ENCODE measurements at regions of chr11 and their contacts with region 1.

Region 1: GRCh38 chr11:62841361-62842184 is 2.2 kb upstream of the WDR74 start:
- DNase-seq: peak; percentile 81 to 96 (median 88)
- ATAC-seq: peak; percentile 89
- H3K4me3 ChIP-seq: peak overlapping the region; percentile 33
- H3K27ac ChIP-seq: peak overlapping the region; percentile 89
- H3K4me1 ChIP-seq: peaks cover 8 to 19% of the 10 kb centered on the region in 2 experiments; a peak in 3 of 5 replicates
- H3K27me3 ChIP-seq: no peaks in the 10 kb centered on the region
- CTCF ChIP-seq: 0 out of 6 replicates have a peak, but pooled peaks of 2 of the 3 experiments have one; percentile 3 to 10
- EP300 ChIP-seq: peak; percentile 82
- POLR2A ChIP-seq: peak; percentile 100
- RAD21 ChIP-seq: peak; percentile 33 to 74; a peak in 3 of 4 replicates

Region 2: GRCh38 chr11:62591448-62592145 is 250.0 kb before region 1 on chr11 and contains the start of gene TUT1:
- CTCF ChIA-PET with region 1: no interaction called
- POLR2A ChIA-PET with region 1: interaction called, 10 read pairs
- in situ Hi-C with region 1: no loop called
- intact Hi-C with region 1: loop called (anchors 2 kb)
- DNase-seq: peak; percentile 81 to 99 (median 86)
- ATAC-seq: peak; percentile 91
- H3K4me3 ChIP-seq: peak within 1 kb of the TSS; percentile 63
- H3K27ac ChIP-seq: peak within 1 kb of the TSS; percentile 90
- H3K4me1 ChIP-seq: peaks cover 24 to 25% of the 10 kb centered on the region in 2 experiments
- H3K27me3 ChIP-seq: no peaks in the 10 kb centered on the region
- CTCF ChIP-seq: peak; percentile 1 to 6 (median 1); a peak in 1 of 6 replicates
- EP300 ChIP-seq: peak; percentile 79
- POLR2A ChIP-seq: peak; percentile 98
- RAD21 ChIP-seq: peak in 1 of 2 experiments; percentile 2; a peak in 1 of 4 replicates
- polyA plus RNA-seq, gene TUT1: 0.66 to 1.5 TPM

Region 3: DNA sequence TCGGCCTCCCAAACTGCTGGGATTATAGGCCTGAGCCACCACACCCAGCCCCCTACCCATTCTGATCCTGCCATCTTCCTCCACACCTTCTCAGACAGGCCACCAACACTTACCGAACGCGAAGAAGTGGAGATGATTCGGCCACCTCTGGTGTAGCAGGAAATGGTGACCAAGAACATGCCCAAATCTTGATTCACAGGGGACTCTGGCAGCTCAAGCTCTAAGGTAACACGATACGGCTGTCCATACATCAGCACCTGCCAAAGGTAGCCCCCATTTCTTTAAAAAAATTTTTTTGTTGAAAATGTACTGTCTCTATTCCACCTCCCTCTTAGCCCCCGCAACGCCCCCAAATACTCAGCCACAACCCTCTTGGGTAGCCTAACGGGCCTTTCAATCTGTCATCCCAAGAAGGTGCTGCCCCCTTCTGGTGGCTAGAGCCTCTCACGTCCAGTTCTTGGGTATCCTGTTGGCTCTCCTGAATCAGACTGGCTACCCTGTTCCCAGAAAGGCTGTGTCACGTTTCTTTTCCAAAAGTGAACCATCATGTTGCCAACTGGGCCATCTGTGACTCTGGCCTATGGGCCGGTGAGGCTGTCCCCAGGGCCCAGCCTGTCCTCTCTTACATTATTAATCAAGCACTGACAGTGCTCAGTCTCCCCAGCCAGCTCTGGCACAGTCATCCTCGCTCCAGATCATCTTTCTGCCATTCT is 147.0 kb before region 1 on chr11:
- CTCF ChIA-PET with region 1: no interaction called
- POLR2A ChIA-PET with region 1: no interaction called
- in situ Hi-C with region 1: no loop called
- intact Hi-C with region 1: no loop called
- DNase-seq: peak; percentile 73 to 90 (median 78)
- ATAC-seq: peak; percentile 98
- H3K4me3 ChIP-seq: no peak overlapping the region
- H3K27ac ChIP-seq: no peak overlapping the region; the same call in 2 of the 3 replicates
- H3K4me1 ChIP-seq: no peaks in the 10 kb centered on the region
- H3K27me3 ChIP-seq: no peaks in the 10 kb centered on the region
- CTCF ChIP-seq: peak; percentile 87 to 90 (median 87)
- EP300 ChIP-seq: no peak
- POLR2A ChIP-seq: no peak
- RAD21 ChIP-seq: peak; percentile 77 to 84

Region 4: DNA sequence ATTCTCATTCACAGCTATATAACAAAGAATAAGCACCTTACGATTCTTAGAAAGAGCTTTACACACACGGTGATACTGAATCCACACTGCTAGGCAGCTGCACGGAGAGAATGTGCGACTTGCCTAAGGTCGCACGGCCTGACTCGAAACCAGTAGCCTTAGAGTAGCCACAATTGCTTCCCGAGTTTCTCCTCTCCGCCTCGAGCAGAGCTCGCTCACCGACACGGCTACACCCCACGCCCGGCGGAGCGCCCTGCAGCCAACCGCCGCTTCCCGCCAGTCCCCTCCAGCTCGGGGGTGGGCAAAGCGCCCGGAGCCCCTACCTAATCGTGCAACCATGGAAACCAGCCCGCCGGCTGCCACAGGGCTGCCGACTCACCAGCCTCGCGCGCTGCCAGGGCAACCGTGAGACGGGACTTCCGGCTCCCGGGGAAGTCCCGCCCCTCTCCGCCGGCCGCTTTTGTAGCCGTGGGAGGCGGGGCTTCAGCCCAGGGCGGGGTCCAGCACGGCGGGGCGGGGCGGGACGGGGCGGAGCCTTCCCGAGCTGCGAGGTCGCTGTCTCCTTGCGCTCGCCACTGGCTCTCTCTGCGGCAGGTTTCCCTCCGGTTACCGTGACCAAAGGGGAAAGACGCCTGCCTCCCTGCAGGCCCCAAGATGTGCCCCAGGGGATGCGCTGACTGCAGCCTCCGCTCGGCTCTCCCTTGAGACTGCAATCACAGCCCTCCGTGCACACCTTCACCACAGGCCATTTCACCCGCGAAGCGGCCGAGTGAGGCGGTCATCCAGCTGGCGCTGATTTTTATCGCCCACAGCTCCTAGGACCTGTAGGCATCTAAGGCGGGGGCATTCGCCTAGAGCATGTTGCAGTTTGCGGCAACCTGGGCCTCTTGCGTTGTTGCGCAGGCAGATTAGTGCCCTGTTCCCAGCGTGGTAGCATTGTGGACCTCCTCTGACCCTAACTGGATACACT is 135.4 kb before region 1 on chr11:
- CTCF ChIA-PET with region 1: no interaction called
- POLR2A ChIA-PET with region 1: interaction called, 12 read pairs
- in situ Hi-C with region 1: no loop called
- intact Hi-C with region 1: no loop called
- DNase-seq: peak; percentile 93 to 97 (median 96)
- ATAC-seq: peak; percentile 95
- H3K4me3 ChIP-seq: peak overlapping the region; percentile 72
- H3K27ac ChIP-seq: peak overlapping the region; percentile 82
- H3K4me1 ChIP-seq: peaks cover 29 to 42% of the 10 kb centered on the region in 2 experiments
- H3K27me3 ChIP-seq: no peaks in the 10 kb centered on the region
- CTCF ChIP-seq: no peak
- EP300 ChIP-seq: no peak
- POLR2A ChIP-seq: peak; percentile 79
- RAD21 ChIP-seq: no peak

Region 5: DNA sequence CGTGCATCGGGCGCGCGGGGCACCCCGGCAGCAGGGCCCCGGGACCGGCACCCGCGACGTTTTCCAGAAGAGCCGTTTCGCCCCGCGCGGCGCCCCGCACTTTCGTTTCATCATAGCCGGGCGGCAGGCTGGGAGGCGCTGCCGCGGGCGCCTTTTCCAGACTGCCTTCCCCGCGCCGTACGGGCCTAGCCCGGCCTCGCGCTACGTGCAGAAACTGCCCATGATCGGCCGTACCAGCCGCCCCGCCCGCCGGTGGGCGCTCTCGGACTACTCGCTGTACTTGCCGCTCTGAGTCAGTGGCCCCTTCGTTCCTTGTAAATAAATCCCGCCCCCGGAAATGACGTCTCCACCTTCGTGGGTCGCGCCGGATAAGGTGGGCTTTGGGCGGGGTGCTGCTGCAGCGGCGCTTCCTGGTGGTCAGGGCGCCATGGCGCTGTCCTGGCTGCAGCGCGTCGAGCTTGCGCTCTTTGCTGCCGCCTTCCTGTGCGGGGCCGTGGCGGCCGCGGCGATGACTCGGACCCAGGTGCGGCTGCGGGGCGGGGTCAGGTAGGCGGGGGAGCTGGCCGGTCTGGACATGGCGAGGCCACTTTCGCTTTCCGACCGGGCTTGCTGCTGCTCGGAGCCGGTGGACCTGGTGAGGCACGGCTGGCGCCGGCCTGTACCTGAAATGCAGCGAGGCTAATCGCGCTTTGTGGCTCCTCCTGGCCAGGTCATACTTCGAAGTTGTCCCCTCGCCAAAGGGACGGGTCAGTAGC is 54.4 kb before region 1 on chr11 and contains the start of gene TMEM179B:
- CTCF ChIA-PET with region 1: interaction called, 3 read pairs
- POLR2A ChIA-PET with region 1: interaction called, 69 read pairs
- in situ Hi-C with region 1: no loop called
- intact Hi-C with region 1: loop called (anchors 1 kb)
- DNase-seq: peak; percentile 83 to 99 (median 90)
- ATAC-seq: peak; percentile 80
- H3K4me3 ChIP-seq: peak within 1 kb of the TSS; percentile 82
- H3K27ac ChIP-seq: peak within 1 kb of the TSS; percentile 92
- H3K4me1 ChIP-seq: peaks cover 27 to 29% of the 10 kb centered on the region in 2 experiments
- H3K27me3 ChIP-seq: no peaks in the 10 kb centered on the region
- CTCF ChIP-seq: peak; percentile 67 to 90 (median 81)
- EP300 ChIP-seq: no peak
- POLR2A ChIP-seq: peak; percentile 96
- RAD21 ChIP-seq: peak; percentile 28 to 52; a peak in 3 of 4 replicates
- polyA plus RNA-seq, gene TMEM179B: 88.6 to 105 TPM

Region 6: DNA sequence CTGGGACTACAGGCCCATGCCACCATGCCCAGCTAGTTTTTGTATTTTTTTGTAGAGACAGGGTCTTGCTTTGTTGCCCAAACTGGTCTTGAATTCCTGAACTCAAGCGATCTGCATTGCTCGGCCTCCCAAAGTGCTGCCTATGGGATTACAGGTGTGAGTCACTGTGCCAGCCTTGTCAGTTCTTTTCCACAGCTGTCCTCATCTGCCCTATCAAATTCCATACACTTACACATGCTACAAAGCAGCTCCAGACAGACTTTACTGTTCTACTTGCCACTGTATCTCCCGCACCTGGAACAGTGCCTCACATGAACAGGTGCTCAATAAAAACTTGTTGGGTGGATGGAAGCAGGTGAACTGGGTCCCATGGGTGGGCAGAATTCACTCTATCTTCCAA is 17.9 kb before region 1 on chr11:
- CTCF ChIA-PET with region 1: no interaction called
- POLR2A ChIA-PET with region 1: interaction called, 70 read pairs
- in situ Hi-C with region 1: no loop called
- intact Hi-C with region 1: no loop called
- DNase-seq: peak in 1 of 4 experiments; percentile 4
- ATAC-seq: no peak
- H3K4me3 ChIP-seq: no peak overlapping the region
- H3K27ac ChIP-seq: no peak overlapping the region
- H3K4me1 ChIP-seq: no peaks in the 10 kb centered on the region
- H3K27me3 ChIP-seq: no peaks in the 10 kb centered on the region
- CTCF ChIP-seq: no peak
- EP300 ChIP-seq: no peak
- POLR2A ChIP-seq: no peak
- RAD21 ChIP-seq: no peak

Region 7: GRCh38 chr11:62880803-62881578 is 39.4 kb after region 1 on chr11 and contains the start of gene SLC3A2:
- CTCF ChIA-PET with region 1: no interaction called
- POLR2A ChIA-PET with region 1: interaction called, 74 read pairs
- in situ Hi-C with region 1: no loop called
- intact Hi-C with region 1: loop called (anchors 1 kb)
- DNase-seq: peak; percentile 83 to 95 (median 86)
- ATAC-seq: peak; percentile 88
- H3K4me3 ChIP-seq: peak within 1 kb of the TSS; percentile 56
- H3K27ac ChIP-seq: peak within 1 kb of the TSS; percentile 95
- H3K4me1 ChIP-seq: peaks cover 56 to 58% of the 10 kb centered on the region in 2 experiments
- H3K27me3 ChIP-seq: no peaks in the 10 kb centered on the region
- CTCF ChIP-seq: peak; percentile 72 to 80 (median 77)
- EP300 ChIP-seq: no peak
- POLR2A ChIP-seq: peak; percentile 99
- RAD21 ChIP-seq: peak; percentile 24 to 43; a peak in 2 of 4 replicates
- polyA plus RNA-seq, gene SLC3A2: 20.0 to 39.7 TPM

Measured in K562 (cell line).